T-cell (primary cell): ENCODE measurements at regions of chr6 and their contacts with region 1.

Region 1: GRCh38 chr6:37897321-37897720 is 77.8 kb downstream of the ZFAND3 start:
- DNase-seq: no peak
- ATAC-seq: no peak
- H3K4me3 ChIP-seq: no peak overlapping the region
- H3K4me3 Mint-ChIP-seq: no peak overlapping the region
- H3K27ac ChIP-seq: no peak overlapping the region
- H3K27ac Mint-ChIP-seq: no peak overlapping the region
- H3K4me1 ChIP-seq: peaks cover 0 to 9% of the 10 kb centered on the region in 2 experiments
- H3K4me1 Mint-ChIP-seq: peaks cover 62 to 68% (median 67%) of the 10 kb centered on the region in 3 donors
- H3K27me3 ChIP-seq: no peaks in the 10 kb centered on the region
- H3K27me3 Mint-ChIP-seq: no peaks in the 10 kb centered on the region

Region 2: DNA sequence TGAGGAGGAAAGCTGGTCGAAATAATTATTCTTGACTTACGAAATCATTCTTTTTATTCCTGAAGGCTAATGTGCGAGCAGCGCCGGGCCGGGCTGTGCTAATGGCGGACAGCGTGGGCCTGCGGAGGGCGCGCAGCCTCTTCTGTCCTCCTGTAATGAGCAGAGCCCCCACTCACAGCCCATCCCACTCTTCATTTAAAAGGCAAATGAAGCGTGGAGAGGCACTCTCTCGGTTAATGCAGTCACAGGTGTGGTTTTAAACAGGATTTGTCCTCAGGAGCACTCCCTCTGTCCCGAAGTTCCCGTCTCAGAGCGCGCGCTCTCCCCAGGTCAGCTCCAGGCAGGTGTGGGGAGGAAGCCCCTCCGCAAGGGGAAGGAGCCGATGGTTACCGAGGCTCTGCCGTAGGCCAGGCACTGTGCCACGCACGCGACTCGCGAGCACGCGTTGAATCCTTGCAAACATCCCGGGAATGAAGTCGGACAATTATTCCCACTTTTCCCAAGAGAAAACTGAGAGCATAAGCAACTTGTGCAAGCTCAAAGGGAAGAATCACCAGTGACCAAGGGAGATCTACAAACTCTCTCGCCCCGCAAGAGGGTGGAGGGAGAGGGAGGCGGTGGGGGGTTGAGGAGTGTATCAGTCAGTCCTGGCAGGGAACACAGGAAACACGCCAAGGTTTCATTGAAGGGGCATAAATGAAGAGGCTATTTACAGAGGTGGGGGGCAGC is 113.3 kb before region 1 on chr6:
- CTCF ChIA-PET with region 1: no interaction called
- POLR2A ChIA-PET with region 1: no interaction called
- DNase-seq: peak in 4 of 35 experiments; percentile 3 to 23 (median 10)
- ATAC-seq: peak; percentile 59 to 64 (median 63)
- H3K4me3 ChIP-seq: peak overlapping the region; percentile 42 to 75
- H3K4me3 Mint-ChIP-seq: peak overlapping the region; percentile 64 to 87 (median 65)
- H3K27ac ChIP-seq: no peak overlapping the region
- H3K27ac Mint-ChIP-seq: peak overlapping the region in 1 of 2 donors; percentile 74
- H3K4me1 ChIP-seq: peaks cover 0 to 19% of the 10 kb centered on the region in 2 experiments
- H3K4me1 Mint-ChIP-seq: peaks cover 16 to 19% (median 17%) of the 10 kb centered on the region in 3 donors
- H3K27me3 ChIP-seq: peaks cover 0 to 41% of the 10 kb centered on the region in 2 experiments
- H3K27me3 Mint-ChIP-seq: peaks cover 22 to 39% of the 10 kb centered on the region in 2 donors

Region 3: GRCh38 chr6:38501931-38502330 is 604.6 kb after region 1 on chr6:
- CTCF ChIA-PET with region 1: interaction called in 1 of 2 experiments, 10 read pairs
- POLR2A ChIA-PET with region 1: no interaction called
- DNase-seq: no peak
- ATAC-seq: no peak
- H3K4me3 ChIP-seq: no peak overlapping the region
- H3K4me3 Mint-ChIP-seq: no peak overlapping the region
- H3K27ac ChIP-seq: no peak overlapping the region
- H3K27ac Mint-ChIP-seq: no peak overlapping the region
- H3K4me1 ChIP-seq: no peaks in the 10 kb centered on the region
- H3K4me1 Mint-ChIP-seq: no peaks in the 10 kb centered on the region
- H3K27me3 ChIP-seq: no peaks in the 10 kb centered on the region
- H3K27me3 Mint-ChIP-seq: no peaks in the 10 kb centered on the region